ENCODE measurements at regions of chrX and their contacts with region 1.

Region 1: GRCh38 chrX:104310090-104310489 is 55.4 kb upstream of the ESX1 start:
- DNase-seq: peak in 1 of 2 experiments; percentile 37
- ATAC-seq: peak; percentile 92 to 93
- H3K4me3 ChIP-seq: peak overlapping the region; percentile 35
- H3K27ac ChIP-seq: 0 out of 6 replicates have a peak overlapping the region, but pooled peaks of 1 of the 2 experiments have one; percentile 28
- H3K4me1 ChIP-seq: peaks cover 2% of the 10 kb centered on the region
- CTCF ChIP-seq: peak; percentile 68
- EP300 ChIP-seq: no peak
- POLR2A ChIP-seq: no peak
- RAD21 ChIP-seq: peak; percentile 77 to 80

Region 2: DNA sequence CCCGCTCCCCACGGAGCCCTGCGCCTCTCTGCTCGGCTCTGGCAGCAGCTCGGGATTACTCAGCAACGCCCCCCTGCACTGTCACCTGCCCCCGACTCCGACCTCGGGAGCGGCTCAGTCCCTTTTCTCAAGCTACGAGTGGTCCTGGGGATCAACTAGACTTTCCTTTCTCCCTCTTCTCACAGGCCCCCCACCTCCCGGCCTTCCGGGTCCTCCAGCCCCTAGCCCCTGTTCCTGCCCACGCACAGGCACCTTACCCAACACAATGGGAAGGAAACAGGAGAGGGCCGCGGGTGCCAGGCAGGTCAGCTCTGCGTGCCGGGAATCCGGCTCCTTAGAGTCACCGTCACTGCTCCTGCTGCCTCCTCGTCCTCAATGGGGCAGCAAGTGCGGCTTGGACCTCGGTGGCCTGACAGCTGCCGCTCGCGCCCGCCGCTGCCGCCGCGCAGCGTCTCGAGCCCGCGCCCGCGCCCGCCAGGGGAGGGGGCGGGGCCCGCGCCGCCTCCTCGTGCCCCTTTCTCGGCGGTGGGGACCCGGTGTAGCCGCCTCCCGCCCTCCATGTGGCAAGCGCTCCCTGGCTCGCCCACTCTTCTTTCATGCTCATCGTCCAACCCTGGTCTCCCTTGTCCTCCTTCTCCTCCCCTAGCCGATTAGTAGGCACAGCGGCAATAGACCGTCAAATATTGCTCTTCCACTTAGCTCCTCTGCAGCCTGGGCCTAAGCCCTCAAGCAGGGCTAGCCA is 478.1 kb before region 1 on chrX and contains the start of gene RAB9B:
- CTCF ChIA-PET with region 1: no interaction called
- POLR2A ChIA-PET with region 1: no interaction called
- DNase-seq: no peak
- ATAC-seq: peak; percentile 88 to 97
- H3K4me3 ChIP-seq: peak within 1 kb of the TSS; percentile 59
- H3K27ac ChIP-seq: peak within 1 kb of the TSS in 1 of 2 experiments; percentile 75; a peak in 4 of 6 replicates
- H3K4me1 ChIP-seq: no peaks in the 10 kb centered on the region
- CTCF ChIP-seq: no peak
- EP300 ChIP-seq: no peak
- POLR2A ChIP-seq: no peak
- RAD21 ChIP-seq: no peak
- polyA plus RNA-seq, gene RAB9B: 0.15 and 0.16 TPM in 2 replicates

Region 3: GRCh38 chrX:104295636-104296035 is 14.5 kb before region 1 on chrX:
- CTCF ChIA-PET with region 1: interaction called, 19 read pairs
- POLR2A ChIA-PET with region 1: no interaction called
- DNase-seq: no peak
- ATAC-seq: no peak
- H3K4me3 ChIP-seq: no peak overlapping the region
- H3K27ac ChIP-seq: no peak overlapping the region
- H3K4me1 ChIP-seq: no peaks in the 10 kb centered on the region
- CTCF ChIP-seq: no peak
- EP300 ChIP-seq: no peak
- POLR2A ChIP-seq: no peak
- RAD21 ChIP-seq: no peak

Region 4: DNA sequence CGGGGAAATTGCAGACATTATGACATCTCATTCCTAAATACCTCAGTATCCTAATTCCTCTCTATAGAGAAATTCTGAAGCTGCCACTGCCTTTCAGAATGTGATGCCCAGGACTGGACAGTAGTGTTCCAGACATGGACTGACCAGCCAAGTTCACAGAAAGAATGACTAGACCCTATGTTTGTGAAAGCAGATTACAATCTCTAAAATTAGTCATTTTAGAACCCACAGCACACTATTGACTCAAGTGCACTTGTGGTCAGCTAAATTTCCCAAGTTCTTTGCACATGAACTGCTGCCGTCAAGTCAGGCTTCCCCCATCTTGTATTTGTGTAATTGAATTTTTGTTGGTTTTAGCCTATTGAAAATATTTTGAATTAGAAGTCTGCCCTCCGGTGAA is 25.7 kb after region 1 on chrX:
- CTCF ChIA-PET with region 1: interaction called, 70 read pairs
- POLR2A ChIA-PET with region 1: no interaction called
- DNase-seq: peak in 1 of 2 experiments; percentile 38
- ATAC-seq: peak; percentile 50 to 82; a peak in 5 of 6 replicates
- H3K4me3 ChIP-seq: no peak overlapping the region
- H3K27ac ChIP-seq: no peak overlapping the region
- H3K4me1 ChIP-seq: peaks cover 9% of the 10 kb centered on the region; the same call in 1 of the 3 replicates
- CTCF ChIP-seq: no peak
- EP300 ChIP-seq: no peak
- POLR2A ChIP-seq: no peak
- RAD21 ChIP-seq: no peak

Region 5: GRCh38 chrX:104343428-104344129 is 33.5 kb after region 1 on chrX:
- CTCF ChIA-PET with region 1: interaction called, 70 read pairs
- POLR2A ChIA-PET with region 1: no interaction called
- DNase-seq: peak; percentile 20 to 78
- ATAC-seq: peak; percentile 85 to 97
- H3K4me3 ChIP-seq: no peak overlapping the region
- H3K27ac ChIP-seq: no peak overlapping the region
- H3K4me1 ChIP-seq: no peaks in the 10 kb centered on the region
- CTCF ChIP-seq: peak; percentile 65
- EP300 ChIP-seq: no peak
- POLR2A ChIP-seq: no peak
- RAD21 ChIP-seq: peak; percentile 70 to 73

Region 6: DNA sequence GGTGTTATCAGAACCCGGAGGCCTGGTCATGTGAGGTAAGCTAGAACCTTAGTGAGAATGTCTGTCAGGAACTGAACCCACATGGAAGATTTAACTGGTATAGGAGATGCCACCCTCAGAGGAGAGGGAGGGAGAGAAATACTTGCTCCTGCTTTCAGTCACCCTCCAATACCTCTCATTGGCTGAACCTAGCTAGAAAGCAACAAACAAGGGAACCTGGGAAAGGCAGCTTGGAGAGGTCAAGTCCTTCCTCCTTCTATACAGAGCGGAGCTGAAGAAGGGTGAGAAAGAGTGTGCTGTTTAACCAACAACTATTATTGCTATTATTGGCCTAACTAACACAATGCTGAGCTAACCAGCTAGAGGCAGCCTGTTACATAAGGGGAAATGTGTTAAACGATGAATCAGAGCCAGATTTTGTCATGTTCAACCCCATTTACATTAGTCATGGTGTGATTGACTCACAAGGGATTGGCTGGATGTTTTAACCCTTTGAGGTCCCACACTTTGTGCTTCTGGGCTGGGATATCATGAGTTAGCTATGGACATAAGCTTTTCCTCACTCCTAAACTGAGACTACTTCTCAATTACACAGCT is 41.2 kb after region 1 on chrX:
- CTCF ChIA-PET with region 1: interaction called, 22 read pairs
- POLR2A ChIA-PET with region 1: no interaction called
- DNase-seq: peak; percentile 44 to 61
- ATAC-seq: peak; percentile 77 to 82
- H3K4me3 ChIP-seq: no peak overlapping the region
- H3K27ac ChIP-seq: no peak overlapping the region
- H3K4me1 ChIP-seq: peaks cover 10% of the 10 kb centered on the region; the same call in 2 of the 3 replicates
- CTCF ChIP-seq: no peak
- EP300 ChIP-seq: no peak
- POLR2A ChIP-seq: no peak
- RAD21 ChIP-seq: no peak

Measured in A549 (cell line).